Heart right ventricle (tissue), 16 donors: ENCODE measurements at regions of chr4 and their contacts with region 1.

Region 1: GRCh38 chr4:168923526-168924194 is 86.4 kb downstream of the CBR4 start:
- DNase-seq: peak in 1 of 2 donors; percentile 63
- ATAC-seq: peak in 6 of 8 donors; percentile 18 to 68 (median 55)
- H3K4me3 ChIP-seq: no peak overlapping the region
- H3K27ac ChIP-seq: no peak overlapping the region
- H3K4me1 ChIP-seq: peaks cover 0 to 15% (median 7%) of the 10 kb centered on the region in 9 donors
- H3K27me3 ChIP-seq: no peaks in the 10 kb centered on the region
- CTCF ChIP-seq: peak; percentile 55 to 86 (median 78)

Region 2: GRCh38 chr4:168514249-168514852 is 409.3 kb before region 1 on chr4:
- intact Hi-C with region 1: loop called in 6 of 10 experiments (anchors 5 to 10 kb)
- DNase-seq: no peak
- ATAC-seq: no peak
- H3K4me3 ChIP-seq: peak overlapping the region in 1 of 10 donors; percentile 3
- H3K27ac ChIP-seq: peak overlapping the region in 3 of 10 donors; percentile 13 to 75 (median 67)
- H3K4me1 ChIP-seq: peaks cover 0 to 67% (median 16%) of the 10 kb centered on the region in 9 donors
- H3K27me3 ChIP-seq: no peaks in the 10 kb centered on the region
- CTCF ChIP-seq: peak; percentile 8 to 66 (median 52)

Region 3: GRCh38 chr4:168585168-168586091 is 338.2 kb before region 1 on chr4:
- intact Hi-C with region 1: loop called in 6 of 10 experiments (anchors 5 kb)
- DNase-seq: peak; percentile 70 to 86
- ATAC-seq: peak; percentile 89 to 94 (median 90)
- H3K4me3 ChIP-seq: no peak overlapping the region
- H3K27ac ChIP-seq: peak overlapping the region in 3 of 10 donors; percentile 57 to 70 (median 67)
- H3K4me1 ChIP-seq: peaks cover 9 to 56% (median 35%) of the 10 kb centered on the region in 9 donors
- H3K27me3 ChIP-seq: no peaks in the 10 kb centered on the region
- CTCF ChIP-seq: peak; percentile 56 to 88 (median 76)

Region 4: GRCh38 chr4:168845897-168846296 is 77.8 kb before region 1 on chr4:
- intact Hi-C with region 1: no loop called
- DNase-seq: no peak
- ATAC-seq: no peak
- H3K4me3 ChIP-seq: no peak overlapping the region
- H3K27ac ChIP-seq: peak overlapping the region in 4 of 10 donors; percentile 3 to 91 (median 56)
- H3K4me1 ChIP-seq: peaks cover 13 to 99% (median 80%) of the 10 kb centered on the region in 9 donors
- H3K27me3 ChIP-seq: no peaks in the 10 kb centered on the region
- CTCF ChIP-seq: no peak

Region 5: DNA sequence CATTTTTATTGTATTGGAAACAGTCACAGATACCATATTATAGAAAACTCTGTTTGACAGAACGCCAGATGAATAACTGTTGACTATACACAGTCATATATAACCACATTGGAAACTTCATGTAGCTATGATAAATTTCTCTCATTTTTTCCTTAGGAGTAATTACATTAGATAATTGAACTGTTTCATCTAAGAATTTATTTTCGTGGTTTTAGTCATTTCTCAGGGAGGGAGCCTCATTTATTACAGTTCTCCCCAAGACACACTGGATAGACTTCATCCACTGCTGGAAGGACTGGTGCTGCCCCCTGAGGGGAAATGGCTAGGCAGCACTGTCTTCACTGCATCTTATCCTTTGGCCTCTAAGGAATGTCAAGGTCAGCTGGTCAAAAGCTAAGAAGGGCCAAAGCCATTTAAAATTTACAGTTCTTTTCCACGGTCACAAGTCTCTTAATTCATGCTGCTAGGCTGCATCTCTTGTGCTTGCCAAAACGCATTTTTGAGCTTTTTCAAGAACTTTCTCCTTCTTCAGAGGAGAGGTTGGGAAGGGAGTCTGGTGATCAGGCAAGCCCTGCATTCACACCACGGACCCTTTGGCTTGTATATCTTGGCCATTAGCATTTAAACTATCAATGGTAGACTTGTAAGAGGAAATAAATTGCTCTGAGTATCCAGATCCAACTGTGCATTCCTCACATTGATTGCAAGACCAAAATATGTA is 58.7 kb before region 1 on chr4:
- intact Hi-C with region 1: no loop called
- DNase-seq: no peak
- ATAC-seq: peak in 3 of 8 donors; percentile 22 to 44 (median 41)
- H3K4me3 ChIP-seq: no peak overlapping the region
- H3K27ac ChIP-seq: peak overlapping the region in 3 of 10 donors; percentile 12 to 32 (median 28)
- H3K4me1 ChIP-seq: peaks cover 0 to 86% (median 49%) of the 10 kb centered on the region in 9 donors
- H3K27me3 ChIP-seq: no peaks in the 10 kb centered on the region
- CTCF ChIP-seq: peak in 5 of 9 donors; percentile 18 to 51 (median 39)

Region 6: GRCh38 chr4:169010125-169011023 is 86.7 kb after region 1 on chr4 and contains the start of gene CBR4:
- intact Hi-C with region 1: loop called in 3 of 10 experiments (anchors 5 to 10 kb)
- DNase-seq: peak; percentile 97
- ATAC-seq: peak; percentile 98 to 99 (median 99)
- H3K4me3 ChIP-seq: peak within 1 kb of the TSS; percentile 63 to 84 (median 68)
- H3K27ac ChIP-seq: peak within 1 kb of the TSS; percentile 74 to 98 (median 94)
- H3K4me1 ChIP-seq: peaks cover 4 to 51% (median 38%) of the 10 kb centered on the region in 9 donors
- H3K27me3 ChIP-seq: no peaks in the 10 kb centered on the region
- CTCF ChIP-seq: peak in 8 of 9 donors; percentile 11 to 46 (median 37)
- total RNA-seq, gene CBR4: 14.0 to 25.3 (median 22.4) TPM

Region 7: DNA sequence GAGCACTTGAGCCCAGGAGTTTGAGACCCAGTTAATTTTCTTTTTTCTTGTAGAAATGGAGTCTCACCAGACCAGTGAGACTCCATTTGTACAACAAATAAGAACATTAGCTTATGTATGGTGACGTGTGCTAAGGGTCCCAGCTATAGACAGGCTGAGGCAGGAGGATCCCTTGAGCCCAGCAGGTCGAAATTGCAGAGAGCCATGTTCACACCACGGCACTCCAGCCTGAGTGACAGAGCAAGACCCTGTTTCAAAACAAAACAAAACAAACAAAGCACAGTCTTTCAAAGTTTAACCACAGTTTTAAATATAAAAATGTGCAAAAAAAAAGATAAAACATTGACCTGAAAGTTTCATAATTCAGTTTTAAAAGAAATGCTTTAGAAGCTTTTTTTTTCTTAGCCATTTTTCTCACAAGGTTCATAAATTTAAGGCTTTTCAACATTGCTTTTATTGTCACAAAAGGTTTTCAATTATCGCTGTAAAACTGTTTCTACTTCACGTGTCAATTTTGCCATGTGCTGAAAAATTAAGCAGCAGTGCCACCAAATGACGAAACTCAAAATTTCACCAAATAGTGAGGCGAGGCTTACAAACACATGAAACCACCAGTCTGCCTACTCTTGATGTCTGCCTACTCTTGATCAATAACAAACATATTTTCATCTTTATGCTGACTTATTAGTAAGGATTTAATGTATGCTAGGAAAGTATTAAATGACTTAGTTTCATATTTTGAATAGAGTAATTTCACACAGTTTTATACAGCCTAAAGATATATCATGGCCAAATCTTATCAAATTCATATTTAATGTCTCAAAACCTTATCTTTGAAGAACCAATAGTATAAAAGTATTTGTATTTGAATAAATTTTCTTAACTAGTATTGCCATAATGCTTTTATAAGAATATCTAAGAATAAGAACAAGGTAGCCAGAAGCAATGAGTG is 562.4 kb after region 1 on chr4:
- intact Hi-C with region 1: loop called in 9 of 10 experiments (anchors 2 to 10 kb)
- DNase-seq: peak in 1 of 2 donors; percentile 23
- ATAC-seq: peak in 4 of 8 donors; percentile 59 to 65 (median 62)
- H3K4me3 ChIP-seq: peak overlapping the region in 1 of 10 donors; percentile 20
- H3K27ac ChIP-seq: no peak overlapping the region
- H3K4me1 ChIP-seq: peaks cover 0 to 5% (median 0%) of the 10 kb centered on the region in 9 donors
- H3K27me3 ChIP-seq: no peaks in the 10 kb centered on the region
- CTCF ChIP-seq: peak in 8 of 9 donors; percentile 35 to 75 (median 65)

Region 8: DNA sequence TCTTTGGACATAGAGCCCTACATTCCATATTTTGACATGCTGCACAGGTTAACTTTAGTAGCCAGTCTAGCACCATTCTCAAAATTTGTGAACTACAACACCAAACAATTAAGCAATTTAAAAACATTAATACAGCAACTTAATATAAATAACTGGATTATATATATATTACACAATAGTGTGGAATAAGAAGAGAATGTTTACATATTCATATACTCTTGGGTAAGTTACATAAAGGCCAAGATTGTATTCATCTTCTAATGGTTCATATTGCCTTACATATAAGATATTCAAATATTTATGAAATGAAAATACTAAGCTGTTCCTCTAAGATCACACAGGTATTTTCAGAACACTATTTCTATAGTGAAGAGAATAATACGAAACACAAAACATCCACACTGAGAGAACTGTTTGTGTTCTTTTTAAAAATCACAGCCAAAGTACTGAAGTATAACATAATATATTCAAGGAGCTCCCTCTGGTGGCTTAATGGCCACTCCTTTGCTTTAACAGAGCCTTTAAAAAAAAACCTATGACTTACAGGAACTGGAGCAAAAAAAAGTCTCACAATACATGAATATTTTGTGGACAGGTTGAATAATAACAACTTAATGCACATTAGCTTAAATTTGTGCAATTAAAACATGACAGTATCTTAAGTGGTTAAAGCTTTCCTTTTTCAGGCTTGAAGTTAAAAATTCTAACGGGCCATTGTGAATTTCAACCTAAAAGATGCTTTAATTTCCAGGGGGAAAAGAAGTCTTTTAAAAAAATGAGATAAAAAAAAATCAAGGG is 642.6 kb after region 1 on chr4:
- intact Hi-C with region 1: loop called in 3 of 10 experiments (anchors 5 kb)
- DNase-seq: peak in 1 of 2 donors; percentile 62
- ATAC-seq: peak in 7 of 8 donors; percentile 68 to 87 (median 81)
- H3K4me3 ChIP-seq: peak overlapping the region in 1 of 10 donors; percentile 18
- H3K27ac ChIP-seq: peak overlapping the region in 1 of 10 donors; percentile 18
- H3K4me1 ChIP-seq: peaks cover 0 to 17% (median 11%) of the 10 kb centered on the region in 9 donors
- H3K27me3 ChIP-seq: no peaks in the 10 kb centered on the region
- CTCF ChIP-seq: peak; percentile 43 to 86 (median 75)